Heart right ventricle (tissue), 16 donors: ENCODE measurements at regions of chr1 and their contacts with region 1.

Region 1: GRCh38 chr1:201309426-201309825 is 26.1 kb downstream of the PKP1 start:
- DNase-seq: peak; percentile 63 to 78
- ATAC-seq: peak; percentile 72 to 87 (median 81)
- H3K4me3 ChIP-seq: no peak overlapping the region
- H3K27ac ChIP-seq: peak overlapping the region in 8 of 10 donors; percentile 35 to 78 (median 58)
- H3K4me1 ChIP-seq: peaks cover 17 to 43% (median 31%) of the 10 kb centered on the region in 9 donors
- H3K27me3 ChIP-seq: peaks cover 0 to 17% (median 0%) of the 10 kb centered on the region in 7 donors
- CTCF ChIP-seq: peak in 3 of 9 donors; percentile 38 to 48 (median 47)

Region 2: DNA sequence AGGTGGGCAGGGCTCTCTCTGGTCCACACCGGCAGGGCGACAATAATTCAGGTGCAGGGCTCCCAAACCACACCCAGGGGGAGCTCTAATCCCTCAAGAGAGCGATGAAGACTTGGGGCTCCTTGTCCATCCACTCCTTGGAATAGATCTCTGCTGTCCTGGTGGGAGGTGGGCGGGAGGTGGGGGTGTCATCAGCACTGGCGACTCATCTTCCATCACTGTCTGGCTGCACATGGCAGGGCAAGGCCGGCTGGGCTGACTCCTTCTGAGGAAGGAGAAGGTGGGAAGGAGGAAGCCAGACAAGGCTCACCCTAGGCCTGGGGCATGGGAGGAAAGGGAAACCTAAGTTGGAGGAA is 38.8 kb after region 1 on chr1:
- intact Hi-C with region 1: loop called in 2 of 10 experiments (anchors 5 kb)
- DNase-seq: no peak
- ATAC-seq: peak in 7 of 8 donors; percentile 5 to 59 (median 48)
- H3K4me3 ChIP-seq: no peak overlapping the region
- H3K27ac ChIP-seq: no peak overlapping the region
- H3K4me1 ChIP-seq: peaks cover 0 to 12% (median 3%) of the 10 kb centered on the region in 9 donors
- H3K27me3 ChIP-seq: peaks cover 0 to 8% (median 0%) of the 10 kb centered on the region in 7 donors
- CTCF ChIP-seq: peak; percentile 33 to 61 (median 50)

Region 3: DNA sequence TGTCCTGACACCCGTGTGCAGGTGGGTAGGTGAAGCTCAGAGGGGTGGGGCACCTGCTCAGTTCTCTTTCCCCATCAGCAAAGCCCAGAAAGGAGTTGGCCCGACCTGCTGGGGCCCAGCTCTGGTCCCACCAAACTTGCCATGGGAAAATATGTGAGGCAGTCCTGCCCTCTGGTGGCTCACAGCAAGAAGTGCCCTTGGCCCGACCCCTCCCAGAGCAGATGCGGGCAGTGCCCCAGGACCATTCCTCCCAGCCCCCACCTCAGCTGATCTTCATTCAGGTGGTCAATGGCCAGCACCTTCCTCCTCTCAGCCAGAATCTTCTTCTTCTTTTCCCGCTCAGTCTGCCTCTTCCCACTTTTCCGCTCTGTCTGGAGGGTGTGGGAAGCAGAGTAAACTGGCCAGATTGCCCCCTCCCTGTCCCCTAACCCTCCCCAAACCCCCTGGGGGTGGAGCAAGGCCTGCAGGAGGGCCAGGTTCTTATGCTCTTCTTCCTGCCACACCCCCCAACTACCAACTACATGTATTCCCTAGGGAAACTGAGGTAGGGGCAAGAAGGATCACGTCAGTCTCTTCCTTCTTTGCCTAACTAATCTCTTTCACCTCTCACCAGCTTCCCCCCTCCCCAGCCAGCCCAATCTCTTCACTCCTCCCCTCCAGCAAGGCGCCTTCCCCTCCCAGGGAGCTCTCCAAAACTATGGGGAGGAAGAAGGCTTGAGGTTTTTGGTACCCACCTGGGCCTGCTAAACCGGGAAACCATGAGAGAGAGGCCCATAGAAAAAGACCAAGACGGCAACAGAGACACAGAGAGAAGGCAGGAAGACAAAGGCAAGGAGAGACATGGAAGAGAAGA is 52.5 kb after region 1 on chr1:
- intact Hi-C with region 1: loop called in 1 of 10 experiments (anchors 2 kb)
- DNase-seq: no peak
- ATAC-seq: peak in 5 of 8 donors; percentile 1 to 23 (median 16)
- H3K4me3 ChIP-seq: no peak overlapping the region
- H3K27ac ChIP-seq: peak overlapping the region in 2 of 10 donors; percentile 7 to 68
- H3K4me1 ChIP-seq: peaks cover 0 to 35% (median 5%) of the 10 kb centered on the region in 9 donors
- H3K27me3 ChIP-seq: no peaks in the 10 kb centered on the region
- CTCF ChIP-seq: peak; percentile 59 to 82 (median 73)